ENCODE measurements at regions of chr1 and their contacts with region 1.

Region 1: GRCh38 chr1:35030756-35031446 is 844 bp downstream of the ZMYM6 start:
- DNase-seq: peak; percentile 66
- ATAC-seq: peak; percentile 22
- H3K4me3 ChIP-seq: peak overlapping the region; percentile 85 to 98 (median 96)
- H3K4me3 Mint-ChIP-seq: peak overlapping the region; percentile 99
- H3K27ac ChIP-seq: peak overlapping the region; percentile 66 to 87
- H3K27ac Mint-ChIP-seq: peak overlapping the region; percentile 95
- H3K4me1 ChIP-seq: peaks cover 19 to 23% of the 10 kb centered on the region in 2 donors
- H3K4me1 Mint-ChIP-seq: peaks cover 42% of the 10 kb centered on the region
- H3K27me3 ChIP-seq: no peaks in the 10 kb centered on the region
- H3K27me3 Mint-ChIP-seq: no peaks in the 10 kb centered on the region
- CTCF ChIP-seq: no peak

Region 2: DNA sequence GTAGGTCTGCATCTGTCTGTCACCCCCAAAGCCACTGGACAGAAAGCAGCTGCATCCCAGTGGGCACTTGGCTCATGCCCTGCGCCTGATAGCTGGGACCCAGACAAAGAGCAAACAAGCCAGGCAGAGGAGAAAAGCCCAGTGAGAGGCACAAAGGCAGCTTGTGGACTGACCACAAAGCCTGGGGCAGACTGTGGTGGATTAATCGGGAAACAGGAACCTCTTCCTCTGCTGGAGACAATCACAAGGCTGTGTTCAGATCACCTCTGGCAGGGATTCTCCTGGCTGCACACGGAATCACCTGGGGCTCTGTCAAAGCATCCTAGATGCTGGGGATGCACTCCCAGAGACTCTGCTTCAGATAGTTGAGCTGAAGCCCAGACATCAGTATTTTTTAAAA is 291.3 kb before region 1 on chr1:
- CTCF ChIA-PET with region 1: no interaction called
- POLR2A ChIA-PET with region 1: no interaction called
- intact Hi-C with region 1: no loop called
- DNase-seq: no peak
- ATAC-seq: no peak
- H3K4me3 ChIP-seq: no peak overlapping the region
- H3K4me3 Mint-ChIP-seq: no peak overlapping the region
- H3K27ac ChIP-seq: no peak overlapping the region
- H3K27ac Mint-ChIP-seq: no peak overlapping the region
- H3K4me1 ChIP-seq: peaks cover 0 to 5% of the 10 kb centered on the region in 2 donors
- H3K4me1 Mint-ChIP-seq: peaks cover 4% of the 10 kb centered on the region
- H3K27me3 ChIP-seq: peaks cover 0 to 4% (median 0%) of the 10 kb centered on the region in 4 experiments
- H3K27me3 Mint-ChIP-seq: peaks cover 20% of the 10 kb centered on the region
- CTCF ChIP-seq: no peak

Region 3: GRCh38 chr1:34984793-34985608 is 45.9 kb before region 1 on chr1 and contains the start of gene TMEM35B:
- CTCF ChIA-PET with region 1: no interaction called
- POLR2A ChIA-PET with region 1: interaction called, 18 read pairs
- intact Hi-C with region 1: loop called (anchors 2 kb)
- DNase-seq: peak; percentile 82
- ATAC-seq: peak; percentile 91
- H3K4me3 ChIP-seq: peak within 1 kb of the TSS; percentile 51 to 83 (median 63)
- H3K4me3 Mint-ChIP-seq: peak within 1 kb of the TSS; percentile 95
- H3K27ac ChIP-seq: peak within 1 kb of the TSS; percentile 63 to 81
- H3K27ac Mint-ChIP-seq: peak within 1 kb of the TSS; percentile 94
- H3K4me1 ChIP-seq: peaks cover 29 to 41% of the 10 kb centered on the region in 2 donors
- H3K4me1 Mint-ChIP-seq: peaks cover 41% of the 10 kb centered on the region
- H3K27me3 ChIP-seq: no peaks in the 10 kb centered on the region
- H3K27me3 Mint-ChIP-seq: no peaks in the 10 kb centered on the region
- CTCF ChIP-seq: peak; percentile 28
- total RNA-seq, gene TMEM35B: 15.9 and 19.6 TPM in 2 replicates

Region 4: GRCh38 chr1:35079003-35079930 is 48.4 kb after region 1 on chr1 and contains the start of gene ZMYM1:
- CTCF ChIA-PET with region 1: interaction called, 12 read pairs
- POLR2A ChIA-PET with region 1: interaction called, 10 read pairs
- intact Hi-C with region 1: loop called (anchors 1 kb)
- DNase-seq: peak; percentile 90
- ATAC-seq: peak; percentile 92
- H3K4me3 ChIP-seq: peak within 1 kb of the TSS; percentile 48 to 83 (median 71)
- H3K4me3 Mint-ChIP-seq: peak within 1 kb of the TSS; percentile 99
- H3K27ac ChIP-seq: peak within 1 kb of the TSS; percentile 86 to 95
- H3K27ac Mint-ChIP-seq: peak within 1 kb of the TSS; percentile 100
- H3K4me1 ChIP-seq: peaks cover 7 to 17% of the 10 kb centered on the region in 2 donors
- H3K4me1 Mint-ChIP-seq: peaks cover 20% of the 10 kb centered on the region
- H3K27me3 ChIP-seq: peaks cover 0 to 5% (median 0%) of the 10 kb centered on the region in 4 experiments
- H3K27me3 Mint-ChIP-seq: peaks cover 14% of the 10 kb centered on the region
- CTCF ChIP-seq: no peak
- total RNA-seq, gene ZMYM1: 17.6 and 18.3 TPM in 2 replicates

Region 5: GRCh38 chr1:35192853-35193664 is 162.2 kb after region 1 on chr1 and contains the start of gene SFPQ:
- CTCF ChIA-PET with region 1: no interaction called
- POLR2A ChIA-PET with region 1: interaction called, 3 read pairs
- intact Hi-C with region 1: loop called (anchors 1 kb)
- DNase-seq: peak; percentile 99
- ATAC-seq: peak; percentile 91
- H3K4me3 ChIP-seq: peak within 1 kb of the TSS; percentile 75 to 97 (median 88)
- H3K4me3 Mint-ChIP-seq: peak within 1 kb of the TSS; percentile 97
- H3K27ac ChIP-seq: peak within 1 kb of the TSS; percentile 95 to 96
- H3K27ac Mint-ChIP-seq: peak within 1 kb of the TSS; percentile 100
- H3K4me1 ChIP-seq: peaks cover 24 to 29% of the 10 kb centered on the region in 2 donors
- H3K4me1 Mint-ChIP-seq: peaks cover 43% of the 10 kb centered on the region
- H3K27me3 ChIP-seq: no peaks in the 10 kb centered on the region
- H3K27me3 Mint-ChIP-seq: no peaks in the 10 kb centered on the region
- CTCF ChIP-seq: no peak
- total RNA-seq, gene SFPQ: 411 and 412 TPM in 2 replicates

Region 6: DNA sequence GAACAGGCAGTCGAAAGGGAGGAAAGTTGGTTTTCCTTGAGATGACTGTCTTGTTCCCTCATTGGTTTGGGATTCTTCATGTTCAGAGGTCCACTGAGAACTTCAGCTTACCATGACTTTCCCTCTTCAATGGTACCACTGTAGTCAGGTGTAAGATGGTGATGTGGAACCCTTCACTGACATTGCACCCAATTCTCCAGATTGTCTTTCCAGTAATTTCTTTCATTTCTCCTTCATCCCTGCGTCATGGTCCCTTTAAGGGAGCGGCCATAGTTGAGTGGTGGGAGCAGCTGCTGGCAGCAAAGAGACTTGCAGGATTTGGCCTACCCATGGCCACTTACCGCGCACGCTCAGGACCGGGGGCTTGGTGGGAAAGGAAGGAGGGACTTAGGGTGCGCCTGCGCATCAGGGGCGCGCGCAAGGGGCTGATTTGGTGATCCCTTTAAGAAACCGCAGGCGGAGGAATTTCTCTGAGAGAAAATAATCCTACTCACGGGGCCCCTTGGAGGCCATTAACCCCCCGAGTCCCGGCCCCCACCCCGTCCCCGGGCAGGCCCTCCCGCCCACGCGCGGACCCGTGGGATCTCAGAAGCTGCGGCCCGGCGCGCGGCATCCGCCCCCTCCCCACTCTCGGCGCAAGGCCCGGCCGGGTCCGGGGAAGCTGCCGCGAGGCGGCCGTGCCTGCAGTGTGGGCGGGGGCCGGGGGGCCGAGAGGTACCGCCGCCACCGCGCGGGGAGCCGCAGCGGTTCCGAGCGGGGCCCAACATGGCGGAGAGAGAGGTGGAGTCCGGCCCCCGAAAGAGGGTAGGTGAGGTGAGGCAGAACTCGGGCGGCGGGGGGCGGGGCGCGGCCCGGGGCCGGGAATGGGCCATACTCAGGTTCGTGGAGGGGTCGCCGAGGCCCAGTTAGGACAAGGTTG is 237.6 kb after region 1 on chr1 and contains the start of gene ZMYM4:
- CTCF ChIA-PET with region 1: interaction called, 3 read pairs
- POLR2A ChIA-PET with region 1: no interaction called
- intact Hi-C with region 1: loop called (anchors 1 kb)
- DNase-seq: peak; percentile 94
- ATAC-seq: peak; percentile 90
- H3K4me3 ChIP-seq: peak within 1 kb of the TSS; percentile 34 to 88 (median 71)
- H3K4me3 Mint-ChIP-seq: peak within 1 kb of the TSS; percentile 87
- H3K27ac ChIP-seq: peak within 1 kb of the TSS; percentile 21 to 90
- H3K27ac Mint-ChIP-seq: peak within 1 kb of the TSS; percentile 89
- H3K4me1 ChIP-seq: peaks cover 14 to 15% of the 10 kb centered on the region in 2 donors
- H3K4me1 Mint-ChIP-seq: peaks cover 28% of the 10 kb centered on the region
- H3K27me3 ChIP-seq: peaks cover 0 to 3% (median under 1%) of the 10 kb centered on the region in 4 experiments
- H3K27me3 Mint-ChIP-seq: peaks cover 17% of the 10 kb centered on the region
- CTCF ChIP-seq: no peak
- total RNA-seq, gene ZMYM4: 44.8 and 45.2 TPM in 2 replicates

Measured in B cell (primary cell).